ENCODE measurements at regions of chr17 and their contacts with region 1.

Region 1: DNA sequence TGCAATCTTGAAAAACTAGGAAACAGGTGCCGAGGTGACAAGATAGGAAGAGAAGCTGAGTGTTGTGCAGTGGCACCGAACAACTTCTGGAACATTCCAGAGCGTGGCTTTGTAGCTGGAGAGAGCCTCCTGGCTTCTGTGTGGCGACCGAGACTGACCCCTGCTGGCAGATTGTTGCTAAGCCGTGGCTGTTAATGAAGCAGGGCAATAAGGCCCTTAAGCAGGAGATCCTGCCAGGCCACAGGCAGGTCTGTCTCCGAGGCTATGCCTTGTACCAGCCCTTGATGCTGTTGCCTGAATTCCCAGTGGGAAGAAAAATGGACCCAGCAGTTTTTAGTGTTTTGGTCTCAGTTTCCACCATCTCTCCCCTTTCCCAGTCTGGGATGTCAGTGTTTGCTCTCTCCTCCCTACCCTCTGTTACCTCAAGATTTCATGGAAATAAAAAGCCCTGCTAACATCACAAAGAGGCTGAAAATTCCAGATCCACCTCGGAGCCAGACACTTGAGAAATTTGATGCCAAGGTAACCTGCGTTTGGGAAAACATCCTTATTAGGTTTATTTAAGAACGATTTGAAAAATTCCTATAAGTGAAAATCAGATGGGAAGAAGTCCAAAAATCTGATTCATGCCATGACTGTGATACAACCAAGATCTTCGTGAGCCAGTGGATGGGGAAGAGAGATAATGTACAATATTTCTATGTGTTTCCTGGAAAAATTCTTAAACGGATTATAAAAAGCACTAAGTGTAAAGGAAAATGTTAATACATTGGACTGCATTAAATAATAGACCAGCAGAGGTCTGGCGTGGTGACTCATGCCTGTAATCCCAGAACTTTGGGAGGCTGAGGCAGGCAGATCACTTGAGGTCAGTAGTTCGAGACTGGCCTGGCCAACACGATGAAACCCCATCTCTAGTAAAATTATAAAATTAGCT is 265.1 kb downstream of the PRKCA start:
- DNase-seq: peak; percentile 63 to 85 (median 68)
- ATAC-seq: peak; percentile 99
- H3K4me3 ChIP-seq: no peak overlapping the region
- H3K27ac ChIP-seq: no peak overlapping the region
- H3K4me1 ChIP-seq: no peaks in the 10 kb centered on the region; a peak in 1 of 5 replicates
- H3K27me3 ChIP-seq: no peaks in the 10 kb centered on the region
- CTCF ChIP-seq: peak; percentile 87 to 93 (median 92)
- EP300 ChIP-seq: peak; percentile 33; the same call in 1 of the 2 replicates
- POLR2A ChIP-seq: no peak
- RAD21 ChIP-seq: peak; percentile 87 to 97

Region 2: GRCh38 chr17:66255112-66255511 is 312.4 kb before region 1 on chr17:
- CTCF ChIA-PET with region 1: interaction called, 31 read pairs
- POLR2A ChIA-PET with region 1: no interaction called
- in situ Hi-C with region 1: loop called (anchors 5 kb)
- intact Hi-C with region 1: loop called (anchors 1 kb)
- DNase-seq: peak; percentile 52 to 80 (median 56)
- ATAC-seq: peak; percentile 94
- H3K4me3 ChIP-seq: no peak overlapping the region
- H3K27ac ChIP-seq: no peak overlapping the region
- H3K4me1 ChIP-seq: peaks cover 0 to 5% of the 10 kb centered on the region in 2 experiments; a peak in 1 of 5 replicates
- H3K27me3 ChIP-seq: no peaks in the 10 kb centered on the region
- CTCF ChIP-seq: peak; percentile 71 to 89 (median 74)
- EP300 ChIP-seq: no peak
- POLR2A ChIP-seq: no peak
- RAD21 ChIP-seq: peak; percentile 97 to 98

Region 3: GRCh38 chr17:66290101-66290722 is 277.3 kb before region 1 on chr17:
- CTCF ChIA-PET with region 1: no interaction called
- POLR2A ChIA-PET with region 1: no interaction called
- in situ Hi-C with region 1: loop called (anchors 10 kb)
- intact Hi-C with region 1: loop called (anchors 1 kb)
- DNase-seq: peak in 2 of 4 experiments; percentile 34 to 50
- ATAC-seq: peak; percentile 90
- H3K4me3 ChIP-seq: no peak overlapping the region
- H3K27ac ChIP-seq: no peak overlapping the region
- H3K4me1 ChIP-seq: peaks cover 0 to 2% of the 10 kb centered on the region in 2 experiments; a peak in 4 of 5 replicates
- H3K27me3 ChIP-seq: no peaks in the 10 kb centered on the region
- CTCF ChIP-seq: peak; percentile 50 to 67 (median 54)
- EP300 ChIP-seq: no peak
- POLR2A ChIP-seq: no peak
- RAD21 ChIP-seq: peak; percentile 27 to 82; a peak in 2 of 4 replicates

Region 4: DNA sequence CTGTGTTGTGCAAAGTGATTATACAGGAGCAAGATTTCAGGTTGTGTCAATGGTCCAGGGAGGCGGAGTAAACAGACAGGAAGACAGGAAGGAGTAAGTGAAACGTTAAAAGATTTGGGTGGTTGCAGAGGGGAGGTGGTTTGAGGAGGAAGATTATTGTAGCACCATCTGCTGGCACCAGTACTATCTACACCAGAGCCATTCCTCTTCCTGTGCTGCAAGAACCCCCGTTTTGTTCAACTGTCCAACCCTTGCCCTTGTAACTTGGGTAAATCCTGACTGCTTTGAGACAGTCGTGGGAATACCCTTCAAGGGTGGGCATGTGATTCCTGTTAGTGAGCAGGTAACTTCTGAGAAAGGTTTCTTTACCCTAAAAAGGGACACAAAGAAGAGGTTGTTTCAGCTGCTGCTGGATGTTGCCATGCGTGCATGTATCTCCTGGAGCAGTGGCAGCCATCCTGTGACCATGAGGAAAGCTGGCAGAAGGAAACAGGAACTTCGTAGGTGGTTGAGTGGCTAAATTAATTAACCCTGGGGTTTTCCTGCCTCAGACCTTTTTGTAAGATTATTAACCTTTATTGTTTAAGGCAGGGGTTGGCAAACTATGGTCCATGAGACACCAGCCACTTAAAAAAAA is 141.0 kb before region 1 on chr17:
- CTCF ChIA-PET with region 1: no interaction called
- POLR2A ChIA-PET with region 1: no interaction called
- in situ Hi-C with region 1: no loop called
- intact Hi-C with region 1: loop called (anchors 2 kb)
- DNase-seq: peak; percentile 16 to 56 (median 40)
- ATAC-seq: peak; percentile 93
- H3K4me3 ChIP-seq: no peak overlapping the region
- H3K27ac ChIP-seq: no peak overlapping the region
- H3K4me1 ChIP-seq: no peaks in the 10 kb centered on the region; a peak in 3 of 5 replicates
- H3K27me3 ChIP-seq: no peaks in the 10 kb centered on the region
- CTCF ChIP-seq: peak; percentile 34 to 57 (median 50); a peak in 5 of 6 replicates
- EP300 ChIP-seq: no peak
- POLR2A ChIP-seq: no peak
- RAD21 ChIP-seq: peak; percentile 43 to 71

Region 5: GRCh38 chr17:66549731-66550207 is 17.7 kb before region 1 on chr17:
- CTCF ChIA-PET with region 1: no interaction called
- POLR2A ChIA-PET with region 1: no interaction called
- in situ Hi-C with region 1: no loop called
- intact Hi-C with region 1: no loop called
- DNase-seq: no peak
- ATAC-seq: no peak
- H3K4me3 ChIP-seq: no peak overlapping the region
- H3K27ac ChIP-seq: no peak overlapping the region
- H3K4me1 ChIP-seq: no peaks in the 10 kb centered on the region; a peak in 2 of 5 replicates
- H3K27me3 ChIP-seq: no peaks in the 10 kb centered on the region
- CTCF ChIP-seq: no peak
- EP300 ChIP-seq: no peak
- POLR2A ChIP-seq: no peak
- RAD21 ChIP-seq: no peak

Region 6: DNA sequence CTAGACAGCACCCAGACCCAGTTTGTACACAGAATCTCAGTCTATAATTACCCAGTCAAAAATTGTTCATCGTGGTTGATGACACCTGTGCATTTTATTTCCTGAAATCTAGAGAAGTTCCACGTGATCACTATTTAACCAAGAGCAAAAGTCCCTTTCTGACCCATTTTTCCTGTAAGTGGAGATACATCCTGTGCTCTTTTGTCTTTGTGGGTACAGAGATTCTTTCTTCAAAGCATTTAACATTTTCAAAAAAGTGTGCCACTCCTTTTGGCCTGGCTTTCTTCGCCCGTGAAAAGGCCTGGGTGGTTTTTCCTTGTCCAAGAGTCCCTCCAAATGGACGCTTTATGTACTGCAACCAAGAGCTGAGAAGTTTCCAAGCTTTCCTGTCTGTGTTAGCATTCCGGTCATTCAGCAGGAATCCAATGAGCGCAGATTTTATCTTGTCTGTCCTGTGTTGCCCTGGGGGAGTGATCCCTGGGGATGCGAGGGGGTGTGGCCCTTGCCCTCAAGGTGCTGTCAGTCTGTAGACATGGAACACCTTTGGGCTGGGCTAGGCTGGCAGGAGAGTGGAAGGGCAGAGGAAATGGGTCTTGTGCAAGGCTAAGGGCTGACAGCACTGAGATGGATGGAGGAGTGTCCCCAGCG is 106.3 kb after region 1 on chr17:
- CTCF ChIA-PET with region 1: no interaction called
- POLR2A ChIA-PET with region 1: no interaction called
- in situ Hi-C with region 1: no loop called
- intact Hi-C with region 1: loop called (anchors 10 kb)
- DNase-seq: peak in 2 of 4 experiments; percentile 19 to 23
- ATAC-seq: peak; percentile 65; the same call in 2 of the 3 replicates
- H3K4me3 ChIP-seq: no peak overlapping the region
- H3K27ac ChIP-seq: no peak overlapping the region
- H3K4me1 ChIP-seq: no peaks in the 10 kb centered on the region; a peak in 1 of 5 replicates
- H3K27me3 ChIP-seq: no peaks in the 10 kb centered on the region
- CTCF ChIP-seq: peak; percentile 53 to 66 (median 65)
- EP300 ChIP-seq: no peak
- POLR2A ChIP-seq: no peak
- RAD21 ChIP-seq: peak; percentile 8 to 60; a peak in 2 of 4 replicates

Measured in K562 (cell line).